Naive thymus-derived CD4-positive, alpha-beta T cell (primary cell): ENCODE measurements at regions of chr3 and their contacts with region 1.

Region 1: GRCh38 chr3:184250167-184250828 is 826 bp downstream of the EEF1AKMT4 start:
- DNase-seq: peak; percentile 70 to 87 (median 83)
- ATAC-seq: peak; percentile 77
- H3K4me3 ChIP-seq: peak overlapping the region; percentile 100
- H3K4me3 Mint-ChIP-seq: peak overlapping the region; percentile 86 to 100 (median 96)
- H3K27ac ChIP-seq: peak overlapping the region; percentile 78
- H3K27ac Mint-ChIP-seq: peak overlapping the region in 8 of 9 donors; percentile 69 to 98 (median 96)
- H3K4me1 ChIP-seq: peaks cover 5 to 12% of the 10 kb centered on the region in 2 donors
- H3K4me1 Mint-ChIP-seq: peaks cover 5 to 22% (median 16%) of the 10 kb centered on the region in 7 donors
- H3K27me3 ChIP-seq: no peaks in the 10 kb centered on the region
- H3K27me3 Mint-ChIP-seq: no peaks in the 10 kb centered on the region

Region 2: GRCh38 chr3:183099026-183099837 is 1151.1 kb before region 1 on chr3 and contains the start of gene MCCC1:
- CTCF ChIA-PET with region 1: no interaction called
- POLR2A ChIA-PET with region 1: no interaction called
- intact Hi-C with region 1: loop called in 1 of 2 experiments (anchors 2 kb)
- DNase-seq: peak; percentile 82 to 98 (median 97)
- ATAC-seq: peak; percentile 99
- H3K4me3 ChIP-seq: peak within 1 kb of the TSS; percentile 73
- H3K4me3 Mint-ChIP-seq: peak within 1 kb of the TSS; percentile 87 to 98 (median 97)
- H3K27ac ChIP-seq: peak within 1 kb of the TSS; percentile 83
- H3K27ac Mint-ChIP-seq: peak within 1 kb of the TSS; percentile 90 to 99 (median 97)
- H3K4me1 ChIP-seq: peaks cover 7 to 10% of the 10 kb centered on the region in 2 donors
- H3K4me1 Mint-ChIP-seq: peaks cover 18 to 52% (median 43%) of the 10 kb centered on the region in 7 donors
- H3K27me3 ChIP-seq: no peaks in the 10 kb centered on the region
- H3K27me3 Mint-ChIP-seq: no peaks in the 10 kb centered on the region
- total RNA-seq, gene MCCC1: 17.7 to 37.5 (median 31.8) TPM

Region 3: GRCh38 chr3:184017672-184018423 is 232.4 kb before region 1 on chr3 and contains the start of gene ABCC5:
- CTCF ChIA-PET with region 1: no interaction called
- POLR2A ChIA-PET with region 1: interaction called, 3 read pairs
- intact Hi-C with region 1: loop called (anchors 1 kb)
- DNase-seq: peak; percentile 62 to 84 (median 79)
- ATAC-seq: peak; percentile 96
- H3K4me3 ChIP-seq: peak within 1 kb of the TSS; percentile 100
- H3K4me3 Mint-ChIP-seq: peak within 1 kb of the TSS; percentile 96 to 100 (median 99)
- H3K27ac ChIP-seq: peak within 1 kb of the TSS; percentile 72
- H3K27ac Mint-ChIP-seq: peak within 1 kb of the TSS; percentile 70 to 95 (median 91)
- H3K4me1 ChIP-seq: peaks cover 8 to 14% of the 10 kb centered on the region in 2 donors
- H3K4me1 Mint-ChIP-seq: peaks cover 11 to 33% (median 25%) of the 10 kb centered on the region in 7 donors
- H3K27me3 ChIP-seq: no peaks in the 10 kb centered on the region
- H3K27me3 Mint-ChIP-seq: peaks cover 5 to 15% (median 9%) of the 10 kb centered on the region in 5 donors
- total RNA-seq, gene ABCC5: 15.6 to 50.4 (median 25.5) TPM

Region 4: DNA sequence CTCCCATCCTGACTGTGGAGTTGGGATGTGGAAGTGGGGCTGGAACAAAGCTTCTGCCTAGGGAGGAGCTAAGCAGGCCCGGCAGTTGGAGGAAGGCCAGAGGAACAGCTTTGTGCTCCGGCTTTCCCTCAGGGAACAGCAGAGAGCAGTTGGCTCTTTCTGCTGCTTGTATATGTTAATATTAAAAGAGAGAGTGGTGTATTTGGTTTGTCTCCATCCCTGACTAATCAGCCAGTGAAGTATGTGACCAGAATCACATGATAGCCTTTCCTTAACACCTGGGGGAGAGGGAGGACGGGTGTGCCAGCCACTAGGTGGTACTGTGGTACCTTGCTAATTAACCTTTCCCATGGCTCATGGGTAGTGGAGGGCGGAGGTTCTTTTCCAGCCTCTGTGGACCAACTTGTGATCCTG is 105.2 kb before region 1 on chr3:
- CTCF ChIA-PET with region 1: interaction called, 3 read pairs
- POLR2A ChIA-PET with region 1: interaction called, 3 read pairs
- intact Hi-C with region 1: loop called in 1 of 2 experiments (anchors 1 kb)
- DNase-seq: peak in 7 of 9 donors; percentile 22 to 50 (median 34)
- ATAC-seq: peak; percentile 77
- H3K4me3 ChIP-seq: no peak overlapping the region
- H3K4me3 Mint-ChIP-seq: no peak overlapping the region
- H3K27ac ChIP-seq: no peak overlapping the region
- H3K27ac Mint-ChIP-seq: peak overlapping the region in 1 of 9 donors; percentile 80
- H3K4me1 ChIP-seq: no peaks in the 10 kb centered on the region
- H3K4me1 Mint-ChIP-seq: peaks cover 0 to 7% (median 0%) of the 10 kb centered on the region in 7 donors
- H3K27me3 ChIP-seq: no peaks in the 10 kb centered on the region
- H3K27me3 Mint-ChIP-seq: no peaks in the 10 kb centered on the region

Region 5: GRCh38 chr3:184185461-184186308 is 64.6 kb before region 1 on chr3 and contains the start of gene ABCF3:
- CTCF ChIA-PET with region 1: interaction called, 4 read pairs
- POLR2A ChIA-PET with region 1: no interaction called
- intact Hi-C with region 1: loop called (anchors 1 kb)
- DNase-seq: peak; percentile 98 to 100 (median 99)
- ATAC-seq: peak; percentile 96
- H3K4me3 ChIP-seq: peak within 1 kb of the TSS; percentile 81
- H3K4me3 Mint-ChIP-seq: peak within 1 kb of the TSS; percentile 91 to 100 (median 98)
- H3K27ac ChIP-seq: peak within 1 kb of the TSS; percentile 89
- H3K27ac Mint-ChIP-seq: peak within 1 kb of the TSS; percentile 89 to 98 (median 97)
- H3K4me1 ChIP-seq: peaks cover 18 to 24% of the 10 kb centered on the region in 2 donors
- H3K4me1 Mint-ChIP-seq: peaks cover 31 to 52% (median 43%) of the 10 kb centered on the region in 7 donors
- H3K27me3 ChIP-seq: no peaks in the 10 kb centered on the region
- H3K27me3 Mint-ChIP-seq: no peaks in the 10 kb centered on the region
- total RNA-seq, gene ABCF3: 79.3 to 153 (median 117) TPM

Region 6: GRCh38 chr3:184289426-184289938 is 39.2 kb after region 1 on chr3:
- CTCF ChIA-PET with region 1: no interaction called
- POLR2A ChIA-PET with region 1: no interaction called
- intact Hi-C with region 1: loop called (anchors 2 kb)
- DNase-seq: peak in 8 of 9 donors; percentile 18 to 71 (median 38)
- ATAC-seq: peak; percentile 67
- H3K4me3 ChIP-seq: no peak overlapping the region
- H3K4me3 Mint-ChIP-seq: no peak overlapping the region
- H3K27ac ChIP-seq: no peak overlapping the region
- H3K27ac Mint-ChIP-seq: peak overlapping the region in 1 of 9 donors; percentile 34
- H3K4me1 ChIP-seq: no peaks in the 10 kb centered on the region
- H3K4me1 Mint-ChIP-seq: no peaks in the 10 kb centered on the region
- H3K27me3 ChIP-seq: no peaks in the 10 kb centered on the region
- H3K27me3 Mint-ChIP-seq: peaks cover 9 to 28% (median 11%) of the 10 kb centered on the region in 5 donors

Region 7: DNA sequence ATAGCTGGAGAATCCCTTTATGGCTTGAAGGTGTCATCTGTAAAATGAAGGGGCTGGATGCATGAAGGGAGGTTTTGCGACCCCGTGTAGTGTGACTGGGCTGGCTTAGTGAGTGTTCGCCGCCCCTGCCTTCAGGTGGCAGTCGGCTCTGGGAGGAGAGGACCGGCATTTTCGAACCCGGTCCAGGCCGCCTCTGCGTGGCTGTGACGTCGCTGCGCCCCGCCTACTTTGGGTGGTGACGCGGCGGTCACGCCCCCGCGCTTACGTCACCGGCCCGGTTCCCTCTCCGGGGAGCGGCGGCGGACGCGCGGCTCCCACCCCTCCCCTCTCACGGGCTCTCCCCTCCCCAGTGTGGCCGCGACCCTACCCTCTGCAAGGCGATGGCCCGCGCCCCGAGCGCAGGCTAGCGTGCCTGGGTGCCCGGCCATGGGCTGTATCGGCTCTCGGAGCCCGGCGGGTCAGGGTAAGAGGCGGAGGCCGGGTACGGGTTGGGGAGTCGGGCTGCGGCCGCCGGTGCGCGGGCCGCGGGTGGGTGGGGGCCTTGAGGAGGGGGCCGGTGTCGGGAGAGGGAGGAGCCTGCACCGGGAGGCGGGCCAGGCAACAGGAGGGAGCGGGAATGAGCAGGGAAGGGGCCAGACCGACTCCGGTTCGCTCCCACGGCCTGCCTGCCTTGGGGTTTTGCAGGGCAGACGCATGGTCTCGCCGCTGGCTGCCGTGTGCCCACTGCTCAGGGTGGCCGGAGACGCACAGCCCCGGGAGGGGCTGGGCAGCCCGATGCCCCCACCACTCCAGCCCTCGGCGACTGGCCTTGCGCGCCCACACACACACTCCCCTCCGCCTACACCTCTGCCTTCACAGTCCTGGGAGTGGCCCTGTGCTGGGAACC is 85.6 kb after region 1 on chr3:
- CTCF ChIA-PET with region 1: no interaction called
- POLR2A ChIA-PET with region 1: no interaction called
- intact Hi-C with region 1: loop called in 1 of 2 experiments (anchors 1 kb)
- DNase-seq: peak; percentile 78 to 96 (median 87)
- ATAC-seq: peak; percentile 86
- H3K4me3 ChIP-seq: peak overlapping the region; percentile 66
- H3K4me3 Mint-ChIP-seq: peak overlapping the region; percentile 88 to 96 (median 92)
- H3K27ac ChIP-seq: peak overlapping the region; percentile 96
- H3K27ac Mint-ChIP-seq: peak overlapping the region; percentile 76 to 99 (median 96)
- H3K4me1 ChIP-seq: peaks cover 8 to 10% of the 10 kb centered on the region in 2 donors
- H3K4me1 Mint-ChIP-seq: peaks cover 18 to 54% (median 22%) of the 10 kb centered on the region in 7 donors
- H3K27me3 ChIP-seq: no peaks in the 10 kb centered on the region
- H3K27me3 Mint-ChIP-seq: no peaks in the 10 kb centered on the region